HepG2 (cell line): ENCODE measurements at regions of chr14 and their contacts with region 1.

Region 1: GRCh38 chr14:66758031-66758613 is 250.2 kb downstream of the GPHN start:
- DNase-seq: peak; percentile 50
- ATAC-seq: peak; percentile 90
- H3K4me3 ChIP-seq: no peak overlapping the region
- H3K27ac ChIP-seq: peak overlapping the region; percentile 31
- H3K4me1 ChIP-seq: peaks cover 15% of the 10 kb centered on the region
- H3K27me3 ChIP-seq: no peaks in the 10 kb centered on the region
- CTCF ChIP-seq: no peak
- EP300 ChIP-seq: no peak
- POLR2A ChIP-seq: no peak
- RAD21 ChIP-seq: no peak

Region 2: DNA sequence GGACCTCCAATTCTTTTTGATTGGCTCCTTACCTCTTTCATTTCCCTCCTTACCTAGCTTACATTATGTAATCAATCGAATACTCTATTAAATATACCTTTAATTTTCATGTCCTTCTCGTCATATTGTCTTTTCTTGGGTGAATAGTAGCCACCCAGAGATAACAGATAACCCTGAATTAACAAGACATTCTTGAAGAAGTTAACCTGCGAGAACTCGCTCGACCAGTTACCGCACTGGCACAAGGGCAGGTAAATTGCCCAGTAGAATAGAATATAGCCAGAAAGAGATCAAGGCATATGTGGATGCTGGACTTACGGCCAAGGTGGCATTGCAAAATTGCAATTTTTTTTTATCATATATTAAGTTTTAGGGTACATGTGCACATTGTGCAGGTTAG is 13.1 kb after region 1 on chr14:
- CTCF ChIA-PET with region 1: no interaction called
- POLR2A ChIA-PET with region 1: no interaction called
- in situ Hi-C with region 1: no loop called
- intact Hi-C with region 1: loop called (anchors 2 kb)
- DNase-seq: no peak
- ATAC-seq: no peak
- H3K4me3 ChIP-seq: no peak overlapping the region
- H3K27ac ChIP-seq: no peak overlapping the region
- H3K4me1 ChIP-seq: no peaks in the 10 kb centered on the region
- H3K27me3 ChIP-seq: no peaks in the 10 kb centered on the region
- CTCF ChIP-seq: no peak
- EP300 ChIP-seq: no peak
- POLR2A ChIP-seq: no peak
- RAD21 ChIP-seq: no peak